CD4-positive, alpha-beta memory T cell (primary cell): ENCODE measurements at regions of chr6 and their contacts with region 1.

Region 1: GRCh38 chr6:32838114-32838958 is at the start of gene TAP2:
- DNase-seq: peak; percentile 95 to 99 (median 96)
- H3K4me3 ChIP-seq: peak within 1 kb of the TSS; percentile 58 to 74
- H3K4me3 Mint-ChIP-seq: peak within 1 kb of the TSS; percentile 91 to 97 (median 93)
- H3K27ac ChIP-seq: peak within 1 kb of the TSS; percentile 99
- H3K27ac Mint-ChIP-seq: peak within 1 kb of the TSS; percentile 93 to 100 (median 99)
- H3K4me1 ChIP-seq: peaks cover 83% of the 10 kb centered on the region
- H3K4me1 Mint-ChIP-seq: peaks cover 66 to 99% (median 78%) of the 10 kb centered on the region in 4 donors
- H3K27me3 ChIP-seq: no peaks in the 10 kb centered on the region
- H3K27me3 Mint-ChIP-seq: no peaks in the 10 kb centered on the region
- total RNA-seq, gene TAP2: 106 to 112 TPM

Region 2: DNA sequence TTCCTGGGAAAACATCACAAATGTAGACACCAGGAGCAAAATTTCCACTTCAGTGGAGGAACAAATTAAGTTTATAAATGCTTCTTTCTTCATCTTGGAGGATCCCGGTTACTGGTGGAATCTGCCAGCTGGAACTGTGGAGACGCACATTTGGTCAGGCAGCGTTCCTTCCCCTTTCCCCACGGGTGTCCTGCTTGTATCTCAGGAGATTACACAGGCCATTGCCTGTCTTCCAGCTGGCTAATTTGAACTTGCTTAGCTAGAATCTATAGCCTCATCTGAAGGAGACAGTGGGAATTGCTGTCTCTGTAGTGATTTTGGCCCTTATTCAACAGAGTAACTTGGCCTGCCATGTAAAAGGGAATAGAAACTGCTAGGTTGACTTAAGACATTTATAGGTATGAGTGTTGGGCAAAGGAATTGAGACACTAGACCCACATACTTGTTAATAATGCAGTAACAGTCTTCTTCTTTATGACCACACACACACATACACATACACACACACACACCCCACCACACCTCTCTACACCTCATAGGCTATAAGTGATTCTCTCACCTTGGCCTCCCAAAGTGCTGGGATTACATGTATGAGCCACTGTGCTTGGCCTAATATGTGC is 501.0 kb before region 1 on chr6:
- CTCF ChIA-PET with region 1: no interaction called
- POLR2A ChIA-PET with region 1: no interaction called
- intact Hi-C with region 1: no loop called
- DNase-seq: no peak
- H3K4me3 ChIP-seq: no peak overlapping the region
- H3K4me3 Mint-ChIP-seq: no peak overlapping the region
- H3K27ac ChIP-seq: no peak overlapping the region
- H3K27ac Mint-ChIP-seq: no peak overlapping the region
- H3K4me1 ChIP-seq: no peaks in the 10 kb centered on the region
- H3K4me1 Mint-ChIP-seq: no peaks in the 10 kb centered on the region
- H3K27me3 ChIP-seq: no peaks in the 10 kb centered on the region
- H3K27me3 Mint-ChIP-seq: peaks cover 12 to 14% of the 10 kb centered on the region in 2 donors

Region 3: GRCh38 chr6:32825966-32826365 is 12.4 kb before region 1 on chr6:
- CTCF ChIA-PET with region 1: interaction called, 34 read pairs
- POLR2A ChIA-PET with region 1: interaction called, 20 read pairs
- intact Hi-C with region 1: no loop called
- DNase-seq: no peak
- H3K4me3 ChIP-seq: no peak overlapping the region
- H3K4me3 Mint-ChIP-seq: no peak overlapping the region
- H3K27ac ChIP-seq: no peak overlapping the region
- H3K27ac Mint-ChIP-seq: peak overlapping the region in 1 of 7 donors; percentile 13
- H3K4me1 ChIP-seq: no peaks in the 10 kb centered on the region
- H3K4me1 Mint-ChIP-seq: peaks cover 0 to 4% (median 0%) of the 10 kb centered on the region in 4 donors
- H3K27me3 ChIP-seq: no peaks in the 10 kb centered on the region
- H3K27me3 Mint-ChIP-seq: no peaks in the 10 kb centered on the region

Region 4: DNA sequence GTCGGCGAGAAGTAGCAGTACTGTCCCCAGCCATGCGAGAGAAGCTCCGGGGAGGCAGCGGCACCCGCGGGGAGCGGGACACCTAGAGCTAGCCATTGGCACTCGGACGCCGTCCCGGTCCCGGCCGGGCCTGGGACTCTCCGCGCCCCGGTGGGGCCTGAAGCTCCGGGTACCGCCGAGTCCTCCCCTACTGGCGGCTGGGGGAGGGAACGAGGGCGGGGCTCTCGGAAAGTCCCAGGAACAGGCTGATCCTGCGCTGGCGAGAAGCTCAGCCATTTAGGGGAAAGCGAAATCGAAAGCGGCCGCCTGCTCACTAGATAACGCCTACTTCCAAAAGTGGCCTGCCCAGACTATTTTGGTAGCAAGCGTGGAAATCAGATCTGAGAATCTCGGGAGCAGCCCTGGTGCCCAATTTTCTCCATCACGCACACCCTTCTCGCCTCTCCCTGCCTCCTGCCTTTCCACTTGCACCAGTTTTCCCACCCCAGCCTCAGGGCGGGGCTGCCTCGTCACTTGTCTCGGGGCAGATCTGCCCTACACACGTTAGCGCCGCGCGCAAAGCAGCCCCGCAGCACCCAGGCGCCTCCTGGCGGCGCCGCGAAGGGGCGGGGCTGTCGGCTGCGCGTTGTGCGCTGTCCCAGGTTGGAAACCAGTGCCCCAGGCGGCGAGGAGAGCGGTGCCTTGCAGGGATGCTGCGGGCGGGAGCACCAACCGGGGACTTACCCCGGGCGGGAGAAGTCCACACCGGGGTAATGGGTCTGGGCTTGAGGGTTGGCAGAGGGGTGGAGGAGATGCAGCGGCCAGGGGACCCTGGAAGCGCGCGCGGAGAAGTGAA is 15.4 kb after region 1 on chr6 and contains the starts of genes PSMB9 and TAP1:
- CTCF ChIA-PET with region 1: interaction called, 480 read pairs
- POLR2A ChIA-PET with region 1: interaction called, 1,160 read pairs
- intact Hi-C with region 1: loop called (anchors 1 kb)
- DNase-seq: peak; percentile 94 to 98 (median 96)
- H3K4me3 ChIP-seq: peak within 1 kb of the TSS; percentile 93 to 98
- H3K4me3 Mint-ChIP-seq: peak within 1 kb of the TSS; percentile 98 to 100 (median 99)
- H3K27ac ChIP-seq: peak within 1 kb of the TSS; percentile 100
- H3K27ac Mint-ChIP-seq: peak within 1 kb of the TSS; percentile 99 to 100 (median 100)
- H3K4me1 ChIP-seq: peaks cover 76% of the 10 kb centered on the region
- H3K4me1 Mint-ChIP-seq: peaks cover 57 to 92% (median 66%) of the 10 kb centered on the region in 4 donors
- H3K27me3 ChIP-seq: no peaks in the 10 kb centered on the region
- H3K27me3 Mint-ChIP-seq: no peaks in the 10 kb centered on the region
- total RNA-seq, gene PSMB9: 141 to 144 TPM
- total RNA-seq, gene TAP1: 136 to 141 TPM

Region 5: GRCh38 chr6:32879691-32880090 is 41.4 kb after region 1 on chr6:
- CTCF ChIA-PET with region 1: interaction called, 12 read pairs
- POLR2A ChIA-PET with region 1: interaction called, 4 read pairs
- intact Hi-C with region 1: no loop called
- DNase-seq: no peak
- H3K4me3 ChIP-seq: no peak overlapping the region
- H3K4me3 Mint-ChIP-seq: no peak overlapping the region
- H3K27ac ChIP-seq: no peak overlapping the region
- H3K27ac Mint-ChIP-seq: no peak overlapping the region
- H3K4me1 ChIP-seq: no peaks in the 10 kb centered on the region
- H3K4me1 Mint-ChIP-seq: no peaks in the 10 kb centered on the region
- H3K27me3 ChIP-seq: no peaks in the 10 kb centered on the region
- H3K27me3 Mint-ChIP-seq: no peaks in the 10 kb centered on the region

Region 6: GRCh38 chr6:32885698-32886286 is 47.5 kb after region 1 on chr6:
- CTCF ChIA-PET with region 1: interaction called, 10 read pairs
- POLR2A ChIA-PET with region 1: interaction called, 4 read pairs
- intact Hi-C with region 1: no loop called
- DNase-seq: peak in 4 of 5 donors; percentile 64 to 75 (median 69)
- H3K4me3 ChIP-seq: no peak overlapping the region
- H3K4me3 Mint-ChIP-seq: no peak overlapping the region
- H3K27ac ChIP-seq: no peak overlapping the region
- H3K27ac Mint-ChIP-seq: no peak overlapping the region
- H3K4me1 ChIP-seq: no peaks in the 10 kb centered on the region
- H3K4me1 Mint-ChIP-seq: no peaks in the 10 kb centered on the region
- H3K27me3 ChIP-seq: no peaks in the 10 kb centered on the region
- H3K27me3 Mint-ChIP-seq: no peaks in the 10 kb centered on the region

Region 7: GRCh38 chr6:32894080-32895005 is 56.0 kb after region 1 on chr6:
- CTCF ChIA-PET with region 1: no interaction called
- POLR2A ChIA-PET with region 1: interaction called, 15 read pairs
- intact Hi-C with region 1: no loop called
- DNase-seq: peak; percentile 91 to 97 (median 91)
- H3K4me3 ChIP-seq: peak overlapping the region; percentile 78 to 90
- H3K4me3 Mint-ChIP-seq: peak overlapping the region; percentile 99 to 100 (median 100)
- H3K27ac ChIP-seq: peak overlapping the region; percentile 84
- H3K27ac Mint-ChIP-seq: peak overlapping the region; percentile 93 to 99 (median 98)
- H3K4me1 ChIP-seq: peaks cover 21% of the 10 kb centered on the region
- H3K4me1 Mint-ChIP-seq: peaks cover 14 to 45% (median 26%) of the 10 kb centered on the region in 4 donors
- H3K27me3 ChIP-seq: no peaks in the 10 kb centered on the region
- H3K27me3 Mint-ChIP-seq: no peaks in the 10 kb centered on the region

Region 8: DNA sequence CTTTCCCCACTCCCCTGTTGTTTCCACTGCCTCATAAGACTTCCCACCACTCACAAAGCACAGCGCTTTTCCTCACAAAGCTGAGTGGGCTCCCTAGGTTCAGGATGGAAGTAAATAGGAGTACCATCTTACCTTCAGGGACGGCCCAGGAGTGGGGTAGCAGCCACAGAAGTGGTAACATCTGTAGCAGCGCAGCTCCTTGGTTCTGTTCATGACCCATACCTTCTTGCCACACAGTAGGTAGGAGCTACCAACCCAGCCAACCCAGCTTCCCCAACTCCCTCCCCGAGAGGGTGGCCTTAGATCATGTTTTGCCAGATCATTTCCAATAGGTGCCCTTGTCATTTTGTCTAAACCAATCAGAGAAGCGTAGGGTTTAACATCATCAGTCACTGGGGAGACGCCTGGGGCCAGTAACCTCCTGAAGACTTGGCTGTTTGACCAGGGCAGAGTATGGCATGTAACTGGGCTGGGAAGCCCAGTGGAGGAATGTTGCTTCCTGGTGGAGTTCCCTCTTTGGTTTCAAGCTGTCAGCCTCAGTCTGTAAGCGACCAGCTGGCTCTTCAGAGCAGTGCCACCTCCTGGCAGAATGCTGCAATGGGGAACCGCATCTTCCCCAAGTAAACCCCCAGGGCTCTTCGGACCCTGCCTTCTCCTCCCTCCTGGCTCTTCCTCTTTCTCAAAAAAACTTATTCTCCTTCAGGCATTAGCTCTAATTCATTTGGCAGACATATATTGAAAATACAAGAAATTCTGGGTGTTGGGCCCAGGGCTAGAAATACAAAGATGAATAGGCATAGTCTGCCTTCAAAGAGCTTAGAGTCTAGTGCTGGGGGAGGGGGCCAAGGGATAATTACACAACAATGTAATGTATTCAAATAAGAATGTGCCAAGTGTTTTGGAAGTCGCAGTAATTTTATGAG is 114.7 kb after region 1 on chr6 and contains the start of gene HLA-DMA:
- CTCF ChIA-PET with region 1: interaction called, 31 read pairs
- POLR2A ChIA-PET with region 1: interaction called, 14 read pairs
- intact Hi-C with region 1: no loop called
- DNase-seq: peak; percentile 76 to 90 (median 85)
- H3K4me3 ChIP-seq: peak within 1 kb of the TSS; percentile 7 to 19
- H3K4me3 Mint-ChIP-seq: peak within 1 kb of the TSS; percentile 18 to 80 (median 68)
- H3K27ac ChIP-seq: peak within 1 kb of the TSS; percentile 31
- H3K27ac Mint-ChIP-seq: peak within 1 kb of the TSS; percentile 49 to 89 (median 82)
- H3K4me1 ChIP-seq: peaks cover 27% of the 10 kb centered on the region
- H3K4me1 Mint-ChIP-seq: peaks cover 24 to 44% (median 34%) of the 10 kb centered on the region in 4 donors
- H3K27me3 ChIP-seq: no peaks in the 10 kb centered on the region
- H3K27me3 Mint-ChIP-seq: no peaks in the 10 kb centered on the region
- total RNA-seq, gene HLA-DMA: 8.5 to 10.2 TPM